Activated naive CD4-positive, alpha-beta T cell treated with anti-CD3 and anti-CD28 coated beads for 36 hours (primary cell): ENCODE measurements at regions of chr3 and their contacts with region 1.

Region 1: GRCh38 chr3:107235928-107236315 is 141.3 kb upstream of the CCDC54 start:
- DNase-seq: peak; percentile 68
- H3K4me3 Mint-ChIP-seq: peak overlapping the region; percentile 47
- H3K27ac Mint-ChIP-seq: no peak overlapping the region
- H3K4me1 Mint-ChIP-seq: peaks cover 8% of the 10 kb centered on the region
- H3K27me3 Mint-ChIP-seq: peaks cover 8% of the 10 kb centered on the region

Region 2: GRCh38 chr3:107429320-107430181 is 193.6 kb after region 1 on chr3:
- CTCF ChIA-PET with region 1: interaction called, 25 read pairs
- intact Hi-C with region 1: loop called (anchors 1 kb)
- DNase-seq: peak; percentile 70
- H3K4me3 Mint-ChIP-seq: peak overlapping the region; percentile 74
- H3K27ac Mint-ChIP-seq: no peak overlapping the region
- H3K4me1 Mint-ChIP-seq: peaks cover 12% of the 10 kb centered on the region
- H3K27me3 Mint-ChIP-seq: peaks cover 10% of the 10 kb centered on the region

Region 3: GRCh38 chr3:107598926-107599771 is 363.2 kb after region 1 on chr3:
- CTCF ChIA-PET with region 1: interaction called, 3 read pairs
- intact Hi-C with region 1: loop called (anchors 2 kb)
- DNase-seq: peak; percentile 61
- H3K4me3 Mint-ChIP-seq: peak overlapping the region; percentile 79
- H3K27ac Mint-ChIP-seq: peak overlapping the region; percentile 85
- H3K4me1 Mint-ChIP-seq: peaks cover 50% of the 10 kb centered on the region
- H3K27me3 Mint-ChIP-seq: no peaks in the 10 kb centered on the region

Region 4: DNA sequence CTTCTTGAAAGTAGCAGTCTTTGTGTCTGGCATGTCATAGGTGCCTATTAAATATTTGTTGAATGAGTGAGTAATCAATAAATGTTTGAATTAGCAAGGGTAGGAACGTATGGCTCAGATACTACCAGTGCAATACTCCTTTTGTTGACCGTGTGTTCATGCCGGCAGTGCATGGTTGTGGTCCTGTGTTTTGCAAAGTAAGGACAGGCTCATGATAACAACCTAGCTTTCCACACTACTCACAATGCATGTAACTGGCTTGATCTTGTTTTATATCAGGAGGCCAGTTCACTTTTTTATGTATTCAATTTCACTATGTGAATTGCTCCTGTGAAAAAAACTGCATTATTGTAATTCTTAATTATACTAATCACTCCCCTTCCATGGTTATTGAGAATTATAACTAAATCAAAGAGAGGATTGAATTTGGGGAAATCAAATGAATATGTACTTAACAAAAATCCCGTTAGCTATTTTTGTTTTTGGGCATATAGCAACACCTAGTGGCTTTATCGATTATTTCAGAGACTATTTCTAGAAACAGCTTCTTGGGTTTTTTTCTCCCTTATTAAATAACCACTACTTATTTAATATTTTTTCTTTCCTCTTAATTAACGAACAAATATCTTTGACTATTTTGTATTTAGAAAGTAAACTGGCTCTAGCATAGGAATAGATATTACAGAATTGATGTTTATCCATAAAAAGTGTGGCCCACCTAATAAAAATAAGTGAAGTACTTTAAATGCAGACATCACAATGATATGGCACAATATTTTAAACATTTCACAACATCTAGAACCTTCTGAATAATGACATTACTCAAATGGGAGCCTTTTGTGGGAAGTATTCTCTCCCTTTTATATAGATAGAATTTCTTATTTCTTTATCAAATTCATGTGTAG is 505.3 kb after region 1 on chr3:
- CTCF ChIA-PET with region 1: no interaction called
- intact Hi-C with region 1: loop called (anchors 5 kb)
- DNase-seq: no peak
- H3K4me3 Mint-ChIP-seq: no peak overlapping the region
- H3K27ac Mint-ChIP-seq: no peak overlapping the region
- H3K4me1 Mint-ChIP-seq: no peaks in the 10 kb centered on the region
- H3K27me3 Mint-ChIP-seq: no peaks in the 10 kb centered on the region

Region 5: DNA sequence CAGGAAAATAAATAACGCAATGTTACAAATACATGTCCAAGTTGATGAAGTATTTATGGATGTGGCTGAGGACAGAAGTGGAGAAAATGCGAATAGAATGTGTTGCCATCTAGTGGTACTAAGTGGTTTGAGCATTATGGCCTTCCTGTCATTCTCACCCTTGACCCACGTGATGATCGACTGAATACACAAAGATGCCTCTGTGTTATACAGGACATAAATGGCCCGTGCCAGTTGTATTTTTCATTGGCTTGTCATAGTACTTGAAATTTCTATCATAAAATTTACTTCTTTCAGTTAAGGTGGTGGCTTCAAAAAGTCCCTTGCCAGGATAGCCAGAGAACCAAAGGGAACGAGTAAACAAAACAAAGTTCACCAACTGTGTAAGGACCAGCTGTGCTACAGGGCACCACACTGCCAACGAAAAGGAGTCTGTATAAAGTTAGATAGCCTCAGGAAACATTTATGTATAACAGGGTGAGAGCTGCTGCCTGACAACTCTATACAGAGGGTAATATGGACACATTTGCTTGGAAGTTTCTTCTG is 1170.8 kb after region 1 on chr3:
- CTCF ChIA-PET with region 1: no interaction called
- intact Hi-C with region 1: loop called (anchors 5 kb)
- DNase-seq: peak; percentile 25
- H3K4me3 Mint-ChIP-seq: no peak overlapping the region
- H3K27ac Mint-ChIP-seq: no peak overlapping the region
- H3K4me1 Mint-ChIP-seq: peaks cover 2% of the 10 kb centered on the region
- H3K27me3 Mint-ChIP-seq: peaks cover 3% of the 10 kb centered on the region